GM10248 (cell line): ENCODE measurements at regions of chr1 and their contacts with region 1.

Region 1: DNA sequence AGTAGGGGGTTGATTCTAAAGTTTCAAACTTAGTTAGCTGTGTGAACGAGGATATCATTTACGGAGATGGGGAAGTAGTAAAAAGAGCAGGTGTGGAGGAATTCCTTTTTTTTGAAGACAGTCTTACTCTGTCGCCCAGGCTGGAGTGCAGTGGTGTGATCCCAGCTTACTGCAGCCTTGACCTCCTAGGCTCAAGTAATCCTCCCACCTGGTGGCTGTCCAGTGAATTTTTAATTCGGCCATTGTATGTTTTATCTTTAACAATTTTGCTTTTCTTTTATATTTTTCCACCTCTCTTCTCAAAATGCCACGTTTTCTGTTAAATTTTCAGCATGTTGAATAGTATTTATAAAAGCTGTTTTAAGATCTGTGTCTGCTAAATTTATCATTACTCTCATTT is 12.3 kb upstream of the CENPF start:
- DNase-seq: no peak
- CTCF ChIP-seq: no peak

Region 2: DNA sequence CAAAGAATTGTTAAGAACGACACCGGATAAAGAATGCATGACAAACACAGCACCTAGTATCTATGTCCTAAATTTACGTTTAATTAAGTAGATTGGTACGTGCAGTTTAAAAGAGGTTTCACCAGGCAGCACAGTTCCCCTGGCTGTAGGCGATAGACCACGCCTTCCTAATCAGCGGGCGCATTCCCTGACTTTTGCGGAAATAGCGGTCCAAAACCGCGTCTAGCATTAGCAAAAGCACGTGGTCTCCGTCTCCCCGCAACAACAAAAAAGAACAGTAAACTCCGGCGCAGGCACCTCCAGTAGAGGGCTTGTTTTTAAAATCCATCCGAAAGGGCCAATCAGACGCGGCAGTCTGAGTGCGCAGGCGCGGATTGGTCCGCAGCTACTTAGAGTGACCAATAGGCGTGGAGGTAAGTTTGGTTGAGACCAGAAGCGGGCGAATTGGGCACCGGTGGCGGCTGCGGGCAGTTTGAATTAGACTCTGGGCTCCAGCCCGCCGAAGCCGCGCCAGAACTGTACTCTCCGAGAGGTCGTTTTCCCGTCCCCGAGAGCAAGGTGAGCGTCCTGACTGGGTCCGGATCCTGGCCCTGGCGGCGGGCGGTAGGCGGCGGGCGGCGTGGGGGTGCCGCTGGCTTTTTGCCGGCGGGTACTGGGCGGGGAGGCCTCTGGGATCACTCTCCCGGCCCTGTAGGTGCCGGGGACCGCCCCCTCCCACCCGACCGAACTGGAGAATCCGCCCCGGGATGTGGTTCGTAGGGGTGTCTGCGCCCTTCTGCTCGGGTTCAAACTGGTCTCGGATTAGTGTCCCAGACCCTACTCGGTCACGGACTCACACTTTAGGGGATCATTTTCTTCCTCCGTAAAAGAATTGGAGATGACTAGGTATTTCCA is 12.3 kb after region 1 on chr1 and contains the start of gene CENPF:
- CTCF ChIA-PET with region 1: interaction called, 12 read pairs
- POLR2A ChIA-PET with region 1: no interaction called
- DNase-seq: peak; percentile 97
- CTCF ChIP-seq: no peak

Region 3: GRCh38 chr1:214864896-214865688 is 274.4 kb after region 1 on chr1:
- CTCF ChIA-PET with region 1: no interaction called
- POLR2A ChIA-PET with region 1: no interaction called
- DNase-seq: no peak
- CTCF ChIP-seq: no peak